Left ventricle myocardium inferior (tissue), 1 donor: ENCODE measurements at regions of chr2 and their contacts with region 1.

Region 1: DNA sequence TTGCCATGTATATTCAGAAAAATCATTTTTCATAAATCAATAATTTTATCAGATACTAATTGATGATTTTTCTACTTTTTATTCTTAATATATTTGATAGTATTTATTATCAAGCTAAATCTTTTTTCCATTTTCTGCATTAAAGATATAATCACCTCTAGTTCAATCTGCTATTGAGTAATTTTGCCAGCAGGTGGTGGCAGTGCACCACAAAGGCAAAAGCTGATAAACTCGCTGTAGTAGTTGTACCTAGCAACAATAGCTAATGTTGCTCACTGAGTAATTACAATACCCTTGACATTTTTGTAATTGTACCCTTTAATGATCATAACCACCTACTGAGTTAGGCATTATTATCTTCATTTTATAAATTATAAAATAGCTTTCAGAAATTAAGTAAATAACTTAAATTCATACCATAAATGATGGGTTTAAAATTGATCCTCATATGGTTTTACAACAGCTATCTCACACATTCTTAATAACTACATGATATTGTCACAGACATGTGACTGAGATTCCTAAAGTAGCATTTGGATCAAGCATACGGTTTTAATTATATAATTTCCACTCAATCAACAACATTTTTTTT is 52.0 kb upstream of the CALCRL start:
- DNase-seq: peak; percentile 27
- H3K4me3 ChIP-seq: no peak overlapping the region
- H3K27ac ChIP-seq: no peak overlapping the region
- H3K4me1 ChIP-seq: peaks cover 21% of the 10 kb centered on the region
- H3K27me3 ChIP-seq: no peaks in the 10 kb centered on the region
- CTCF ChIP-seq: peak; percentile 91

Region 2: DNA sequence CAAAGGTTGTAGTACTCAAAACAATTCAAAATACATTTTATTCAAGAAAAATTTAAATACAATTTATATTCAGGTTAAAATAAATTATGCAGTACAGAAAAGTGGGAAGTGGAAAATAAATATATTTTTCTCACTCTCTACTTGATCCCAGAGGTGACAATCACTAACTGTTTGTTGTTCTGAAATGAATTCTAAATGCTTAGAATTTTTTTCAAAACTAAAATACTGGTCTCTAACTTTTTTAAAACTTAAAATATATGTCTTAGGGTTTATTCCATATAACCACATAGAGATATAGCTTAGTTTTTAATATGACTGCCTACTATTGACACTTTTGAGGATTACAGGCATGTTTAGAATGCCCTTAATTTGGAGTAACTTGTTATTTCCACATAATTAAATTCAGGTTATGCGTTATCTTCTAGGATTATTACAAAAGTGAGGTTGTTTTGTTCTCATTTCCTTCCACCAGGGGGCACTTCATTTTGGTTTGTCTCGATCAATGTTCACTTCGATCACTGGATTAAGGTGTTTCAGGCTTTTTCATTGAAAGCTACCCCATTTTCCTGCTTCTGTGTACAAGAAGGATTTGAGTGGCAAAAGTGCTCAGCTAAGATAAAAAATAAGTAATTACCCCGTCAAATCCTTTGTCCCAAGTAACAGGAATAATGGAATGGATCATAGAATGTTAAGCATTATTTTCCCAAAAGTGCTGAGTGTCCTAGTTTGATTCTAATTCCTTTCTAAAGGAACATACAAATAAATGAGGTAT is 81.3 kb after region 1 on chr2:
- intact Hi-C with region 1: loop called (anchors 2 kb)
- DNase-seq: no peak
- H3K4me3 ChIP-seq: peak overlapping the region; percentile 54
- H3K27ac ChIP-seq: no peak overlapping the region
- H3K4me1 ChIP-seq: peaks cover 7% of the 10 kb centered on the region
- H3K27me3 ChIP-seq: no peaks in the 10 kb centered on the region
- CTCF ChIP-seq: peak; percentile 77

Region 3: DNA sequence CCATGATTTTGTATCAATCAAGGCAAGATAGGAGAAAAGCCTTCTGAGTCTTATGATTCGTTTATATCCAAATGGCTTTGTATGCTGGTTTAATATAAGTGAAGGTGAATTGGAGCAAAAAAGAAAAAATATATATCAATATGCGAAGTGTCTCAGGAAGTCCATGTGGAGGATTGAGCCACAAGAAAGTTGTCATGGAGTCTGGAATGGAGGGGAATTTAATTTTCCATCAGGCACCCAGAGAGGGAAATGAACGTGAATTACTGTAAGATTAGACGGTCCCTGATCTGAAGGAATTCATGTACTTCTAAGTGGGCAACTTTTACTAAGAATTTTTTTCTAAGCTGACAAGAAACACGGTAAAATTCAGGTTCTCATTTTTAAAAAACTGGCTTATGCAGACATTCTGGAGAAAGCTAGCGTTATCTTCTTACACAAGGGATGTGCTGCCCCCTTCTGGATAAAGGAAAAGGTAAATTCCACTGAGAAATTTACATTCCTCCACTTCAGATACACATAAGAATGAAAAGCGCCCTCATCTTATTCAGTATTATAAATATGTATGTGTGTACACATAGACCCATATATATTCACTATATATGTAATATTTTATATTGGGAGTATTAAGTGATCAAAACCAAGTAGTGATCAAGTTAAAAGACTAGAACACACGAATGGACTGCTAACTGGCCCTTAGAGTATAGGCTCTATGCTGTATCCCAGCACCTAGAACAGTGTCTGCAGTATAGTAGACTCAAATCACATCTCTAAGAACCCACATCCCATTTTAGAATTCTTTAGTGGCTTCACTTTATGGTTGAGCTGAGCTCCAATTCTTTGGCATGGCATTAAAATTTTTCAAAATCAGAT is 343.2 kb after region 1 on chr2:
- intact Hi-C with region 1: loop called (anchors 10 kb)
- DNase-seq: no peak
- H3K4me3 ChIP-seq: no peak overlapping the region
- H3K27ac ChIP-seq: no peak overlapping the region
- H3K4me1 ChIP-seq: no peaks in the 10 kb centered on the region
- H3K27me3 ChIP-seq: no peaks in the 10 kb centered on the region
- CTCF ChIP-seq: peak; percentile 60